AG04450 (cell line): ENCODE measurements at regions of chr15 and their contacts with region 1.

Region 1: GRCh38 chr15:48440084-48440483 is 108.9 kb downstream of the DUT start:
- DNase-seq: peak; percentile 78
- H3K4me3 ChIP-seq: no peak overlapping the region
- H3K27ac ChIP-seq: peak overlapping the region; percentile 84
- H3K27me3 ChIP-seq: no peaks in the 10 kb centered on the region
- CTCF ChIP-seq: no peak

Region 2: DNA sequence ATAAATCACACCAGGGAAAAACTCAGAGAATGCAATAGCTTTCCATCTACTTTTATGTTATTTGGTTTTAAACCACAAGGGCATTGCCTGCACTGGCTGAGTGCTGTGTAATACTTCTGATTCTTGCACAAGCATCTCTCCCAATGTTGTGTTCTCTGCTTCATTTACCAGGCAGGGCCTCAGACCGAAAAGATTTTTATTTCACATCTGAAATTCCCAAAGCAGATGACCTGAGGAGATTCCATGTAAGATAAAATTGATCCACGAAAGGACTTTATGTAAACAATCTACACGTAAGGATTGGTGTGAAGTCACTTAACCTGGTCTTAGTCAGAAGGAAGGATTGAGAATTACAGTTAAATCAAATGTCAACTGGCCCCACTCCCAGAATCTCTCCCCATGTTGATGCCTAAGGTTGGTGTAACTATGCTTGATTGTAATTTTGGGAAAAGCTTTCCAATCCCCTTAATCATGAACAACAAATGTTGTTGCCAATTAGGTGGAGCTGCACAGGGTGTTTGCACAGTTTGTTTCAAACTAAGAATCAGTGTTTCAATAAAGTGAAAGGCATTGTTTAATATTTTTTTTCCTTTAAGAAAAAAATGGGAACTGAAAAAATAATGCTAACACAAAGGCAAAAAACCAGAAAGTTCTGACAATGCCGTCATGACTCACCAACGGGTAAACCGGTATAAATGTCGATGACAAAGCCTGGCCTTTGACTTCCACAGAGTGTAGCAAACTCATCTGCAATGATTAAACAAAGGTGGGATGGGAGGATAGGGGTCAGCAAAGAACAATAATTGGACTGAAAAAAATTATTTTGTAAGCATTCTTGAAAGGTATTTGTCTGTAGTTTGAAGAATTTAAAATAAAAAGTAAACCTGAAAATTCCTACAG is 19.7 kb after region 1 on chr15:
- CTCF ChIA-PET with region 1: no interaction called
- POLR2A ChIA-PET with region 1: interaction called, 13 read pairs
- DNase-seq: peak; percentile 62
- H3K4me3 ChIP-seq: no peak overlapping the region
- H3K27ac ChIP-seq: peak overlapping the region; percentile 87
- H3K27me3 ChIP-seq: no peaks in the 10 kb centered on the region
- CTCF ChIP-seq: no peak